Naive thymus-derived CD4-positive, alpha-beta T cell (primary cell): ENCODE measurements at regions of chr19 and their contacts with region 1.

Region 1: DNA sequence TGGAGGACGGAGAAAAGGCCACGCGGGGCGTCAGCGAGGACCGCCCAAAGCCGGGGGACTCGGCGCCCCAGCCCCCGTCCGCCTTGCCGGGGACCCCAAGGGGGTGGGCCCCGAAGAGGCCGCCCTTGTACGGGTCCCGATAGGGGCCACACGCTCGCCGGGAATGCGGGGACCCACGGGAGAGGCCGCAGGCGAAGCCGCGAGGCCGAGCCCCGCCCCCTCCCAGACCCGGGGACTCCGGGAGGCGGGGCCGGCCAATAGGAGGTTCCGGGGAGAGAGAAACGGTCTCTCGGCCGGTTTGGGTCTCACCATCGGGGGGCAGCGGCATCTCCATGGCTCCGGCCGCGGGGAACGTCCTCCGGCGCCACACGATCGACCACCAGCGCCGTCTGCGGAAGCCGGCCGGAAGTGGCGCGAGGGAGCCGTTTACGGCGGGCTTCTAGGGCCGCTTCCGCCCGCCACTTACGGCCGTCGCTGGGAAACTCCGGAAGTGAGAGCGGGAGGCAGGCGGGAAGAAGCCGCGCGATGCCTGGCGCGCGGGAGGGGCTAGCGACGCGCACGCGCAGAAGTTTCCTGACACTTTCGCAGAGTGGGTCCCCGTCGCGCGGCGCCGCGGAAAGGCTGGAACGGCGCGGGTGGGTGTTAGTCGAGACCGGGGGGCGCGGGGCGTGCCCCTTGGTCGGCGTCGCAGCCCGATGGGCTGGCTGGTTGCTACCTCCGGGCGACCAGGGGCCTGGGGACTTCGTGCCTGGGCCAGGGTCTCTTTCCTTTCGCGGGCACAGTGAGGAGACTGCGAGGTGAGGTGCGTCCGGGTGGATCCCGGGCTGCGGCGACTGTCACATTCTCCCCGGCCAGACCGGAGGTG is at the start of gene CHERP:
- DNase-seq: peak; percentile 90 to 96 (median 93)
- ATAC-seq: peak; percentile 95
- H3K4me3 ChIP-seq: peak within 1 kb of the TSS; percentile 90
- H3K4me3 Mint-ChIP-seq: peak within 1 kb of the TSS; percentile 90 to 99 (median 92)
- H3K27ac ChIP-seq: peak within 1 kb of the TSS; percentile 91
- H3K27ac Mint-ChIP-seq: peak within 1 kb of the TSS; percentile 81 to 97 (median 93)
- H3K4me1 ChIP-seq: peaks cover 25 to 39% of the 10 kb centered on the region in 2 donors
- H3K4me1 Mint-ChIP-seq: peaks cover 44 to 69% (median 55%) of the 10 kb centered on the region in 7 donors
- H3K27me3 ChIP-seq: no peaks in the 10 kb centered on the region
- H3K27me3 Mint-ChIP-seq: no peaks in the 10 kb centered on the region
- total RNA-seq, gene CHERP: 53.8 to 80.7 (median 62.7) TPM

Region 2: GRCh38 chr19:16470911-16471811 is 71.1 kb before region 1 on chr19:
- CTCF ChIA-PET with region 1: no interaction called
- POLR2A ChIA-PET with region 1: no interaction called
- intact Hi-C with region 1: loop called in 1 of 2 experiments (anchors 5 kb)
- DNase-seq: peak in 5 of 9 donors; percentile 14 to 40 (median 18)
- ATAC-seq: peak; percentile 2
- H3K4me3 ChIP-seq: peak overlapping the region; percentile 96
- H3K4me3 Mint-ChIP-seq: peak overlapping the region; percentile 84 to 93 (median 88)
- H3K27ac ChIP-seq: peak overlapping the region; percentile 96
- H3K27ac Mint-ChIP-seq: peak overlapping the region; percentile 18 to 87 (median 79)
- H3K4me1 ChIP-seq: peaks cover 5 to 15% of the 10 kb centered on the region in 2 donors
- H3K4me1 Mint-ChIP-seq: peaks cover 30 to 47% (median 41%) of the 10 kb centered on the region in 7 donors
- H3K27me3 ChIP-seq: no peaks in the 10 kb centered on the region
- H3K27me3 Mint-ChIP-seq: peaks cover 0 to 2% (median 0%) of the 10 kb centered on the region in 5 donors

Region 3: DNA sequence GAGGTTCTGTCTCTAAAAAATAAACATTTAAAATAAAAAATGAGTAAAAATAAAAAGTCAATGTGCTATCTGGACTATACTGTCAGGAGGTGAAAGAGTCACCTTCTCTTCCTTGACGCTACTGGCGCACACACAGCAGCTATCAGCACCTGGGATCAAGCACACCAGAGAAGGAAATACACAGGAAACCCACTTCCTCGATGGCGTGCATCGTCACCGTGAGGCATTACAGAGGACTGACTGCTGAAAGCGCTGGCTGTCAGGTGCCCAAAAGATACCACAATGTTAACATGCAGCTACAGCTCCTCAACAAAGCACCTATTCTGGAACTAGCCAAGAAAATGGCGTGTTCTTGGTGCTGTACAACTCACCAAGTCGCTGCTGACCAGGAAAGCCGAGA is 23.9 kb after region 1 on chr19:
- CTCF ChIA-PET with region 1: interaction called, 3 read pairs
- POLR2A ChIA-PET with region 1: interaction called, 12 read pairs
- intact Hi-C with region 1: loop called (anchors 1 kb)
- DNase-seq: peak in 8 of 9 donors; percentile 46 to 95 (median 92)
- ATAC-seq: peak; percentile 100
- H3K4me3 ChIP-seq: peak overlapping the region; percentile 17
- H3K4me3 Mint-ChIP-seq: peak overlapping the region; percentile 76 to 97 (median 82)
- H3K27ac ChIP-seq: peak overlapping the region; percentile 81
- H3K27ac Mint-ChIP-seq: peak overlapping the region; percentile 92 to 100 (median 98)
- H3K4me1 ChIP-seq: peaks cover 22 to 24% of the 10 kb centered on the region in 2 donors
- H3K4me1 Mint-ChIP-seq: peaks cover 14 to 63% (median 30%) of the 10 kb centered on the region in 7 donors
- H3K27me3 ChIP-seq: no peaks in the 10 kb centered on the region
- H3K27me3 Mint-ChIP-seq: no peaks in the 10 kb centered on the region

Region 4: DNA sequence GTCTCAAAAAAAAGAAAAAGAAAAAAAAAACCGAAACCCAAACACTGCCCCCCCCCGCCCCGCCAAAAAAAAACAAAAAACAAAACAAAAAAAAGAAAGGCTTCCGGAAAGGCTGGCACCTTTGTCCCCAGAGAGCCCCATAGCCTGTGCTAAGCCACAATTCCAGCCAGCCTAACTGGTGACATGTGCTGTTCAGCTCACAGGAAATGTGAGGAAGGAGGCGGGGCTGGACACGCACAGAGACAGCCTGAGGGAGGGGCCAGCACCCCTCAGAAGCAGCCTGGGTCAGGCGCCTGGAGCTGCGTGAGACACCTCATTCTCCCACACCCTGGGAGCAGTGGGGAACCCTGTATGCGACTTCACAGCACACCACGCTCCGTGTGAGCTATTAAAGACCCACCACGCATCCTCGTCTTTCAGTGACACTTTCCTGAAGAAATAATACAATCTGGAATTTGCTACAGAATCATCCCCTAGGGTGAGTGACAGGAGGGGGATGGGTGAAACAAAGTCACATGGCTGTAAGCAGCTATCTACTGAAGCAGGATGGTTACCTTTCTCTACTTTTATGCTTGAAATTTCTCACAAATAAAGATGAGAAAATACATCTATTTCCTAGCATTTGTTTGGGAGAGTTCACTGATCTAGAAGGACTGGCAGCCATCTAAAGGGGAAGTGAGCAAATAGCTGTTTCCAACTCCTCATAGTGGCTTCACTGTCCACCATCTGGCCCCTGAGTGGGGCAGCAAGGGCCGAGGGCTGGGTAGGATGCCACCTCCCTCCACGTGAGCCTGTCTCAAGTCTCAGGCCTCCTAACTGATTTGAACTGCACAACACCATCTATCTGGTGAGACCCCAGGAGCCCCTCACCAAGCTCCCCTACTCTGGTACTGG is 42.2 kb after region 1 on chr19:
- CTCF ChIA-PET with region 1: interaction called, 3 read pairs
- POLR2A ChIA-PET with region 1: interaction called, 11 read pairs
- intact Hi-C with region 1: loop called (anchors 1 kb)
- DNase-seq: peak; percentile 68 to 93 (median 86)
- ATAC-seq: peak; percentile 89
- H3K4me3 ChIP-seq: peak overlapping the region; percentile 26
- H3K4me3 Mint-ChIP-seq: peak overlapping the region; percentile 70 to 90 (median 78)
- H3K27ac ChIP-seq: peak overlapping the region; percentile 62
- H3K27ac Mint-ChIP-seq: peak overlapping the region; percentile 82 to 95 (median 90)
- H3K4me1 ChIP-seq: peaks cover 65% of the 10 kb centered on the region in 2 donors
- H3K4me1 Mint-ChIP-seq: peaks cover 49 to 90% (median 77%) of the 10 kb centered on the region in 7 donors
- H3K27me3 ChIP-seq: no peaks in the 10 kb centered on the region
- H3K27me3 Mint-ChIP-seq: no peaks in the 10 kb centered on the region

Region 5: DNA sequence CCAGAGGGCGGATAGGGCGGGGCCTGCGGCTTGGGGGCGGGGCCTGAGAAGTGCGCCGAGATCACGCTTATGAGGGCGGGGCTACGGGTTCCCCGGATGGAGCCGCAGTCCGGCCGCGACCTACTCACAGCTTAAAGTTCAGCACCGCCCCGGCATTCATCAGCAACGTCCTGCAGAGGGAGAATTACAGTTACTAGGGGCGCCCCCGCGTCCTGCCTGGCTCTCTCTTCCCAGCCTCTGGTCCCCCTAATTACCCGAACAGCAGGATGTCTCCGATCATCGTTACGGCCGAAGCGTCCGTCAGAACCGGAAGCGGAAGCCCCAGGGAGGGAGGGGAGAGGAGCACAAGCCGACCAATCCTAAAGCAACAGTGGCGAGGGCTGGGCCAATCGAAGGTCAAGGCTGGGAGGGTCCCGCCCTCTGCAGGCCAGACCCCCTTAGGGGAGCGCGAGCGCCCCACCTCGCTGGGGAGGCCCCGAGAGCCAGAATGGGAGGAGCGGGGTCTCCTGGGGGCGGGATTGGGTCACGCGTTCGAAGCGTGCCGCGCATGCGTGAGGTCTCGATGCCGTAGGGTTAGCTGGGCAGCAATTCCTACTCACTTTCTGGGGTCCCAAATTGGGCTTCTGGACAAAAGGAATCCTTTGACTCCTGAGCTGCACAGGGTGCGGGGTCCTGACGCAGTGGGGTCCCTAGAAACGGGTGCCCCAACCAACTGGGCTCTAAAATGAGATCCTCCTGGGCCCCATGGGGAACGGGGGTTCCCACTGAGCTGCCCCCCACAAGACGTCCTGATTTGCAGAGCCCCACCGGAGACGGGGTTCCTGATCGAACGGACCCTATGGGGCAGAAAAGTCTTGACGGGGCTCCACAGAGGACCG is 117.8 kb after region 1 on chr19 and contains the start of gene SMIM7:
- CTCF ChIA-PET with region 1: interaction called, 5 read pairs
- POLR2A ChIA-PET with region 1: no interaction called
- intact Hi-C with region 1: loop called (anchors 1 kb)
- DNase-seq: peak; percentile 95 to 100 (median 99)
- ATAC-seq: peak; percentile 98
- H3K4me3 ChIP-seq: peak within 1 kb of the TSS; percentile 74
- H3K4me3 Mint-ChIP-seq: peak within 1 kb of the TSS; percentile 88 to 100 (median 98)
- H3K27ac ChIP-seq: peak within 1 kb of the TSS; percentile 91
- H3K27ac Mint-ChIP-seq: peak within 1 kb of the TSS; percentile 96 to 99 (median 98)
- H3K4me1 ChIP-seq: peaks cover 19 to 30% of the 10 kb centered on the region in 2 donors
- H3K4me1 Mint-ChIP-seq: peaks cover 22 to 55% (median 41%) of the 10 kb centered on the region in 7 donors
- H3K27me3 ChIP-seq: no peaks in the 10 kb centered on the region
- H3K27me3 Mint-ChIP-seq: peaks cover 0 to 24% (median 0%) of the 10 kb centered on the region in 5 donors
- total RNA-seq, gene SMIM7: 56.9 to 108 (median 78.5) TPM